ENCODE measurements at regions of chr3 and their contacts with region 1.

Region 1: DNA sequence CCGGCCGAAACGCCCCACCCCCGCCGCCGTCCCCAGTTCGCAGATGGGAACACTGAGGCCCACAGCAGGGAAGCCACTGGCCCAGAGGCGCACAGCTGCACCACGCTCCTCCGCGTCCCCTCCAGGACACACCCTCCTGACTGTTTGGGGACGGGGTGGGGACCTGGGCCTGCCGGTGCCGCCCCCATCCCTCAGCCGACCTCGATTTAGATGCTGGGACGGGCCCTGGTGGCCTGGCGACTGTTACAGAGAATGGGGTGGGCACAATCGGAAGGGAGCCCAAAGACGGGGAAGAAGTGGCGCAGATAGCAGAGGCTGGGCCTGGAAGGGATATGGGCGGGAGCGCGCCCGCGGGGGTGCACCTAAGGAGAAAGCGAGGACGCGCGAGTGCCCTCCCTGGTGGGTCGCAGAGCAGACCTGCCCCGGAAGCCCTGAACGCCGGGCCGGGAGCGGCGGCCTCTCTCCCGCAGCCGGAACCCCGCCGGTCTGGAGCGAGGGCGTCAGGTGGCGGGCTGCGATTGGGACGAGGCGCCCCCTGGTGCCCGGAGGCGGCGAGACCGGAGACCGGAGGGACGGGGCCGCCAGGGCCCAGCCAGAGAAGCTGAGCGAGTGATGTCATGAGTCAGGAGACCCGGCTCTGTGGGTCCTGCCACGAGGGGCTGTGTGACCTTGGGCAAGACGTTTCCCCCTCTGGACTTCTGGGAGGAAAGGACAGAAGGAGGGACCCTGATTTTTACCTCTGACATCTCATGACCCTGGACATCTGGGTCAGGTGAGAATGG is 78.4 kb downstream of the IQSEC1 start:
- DNase-seq: peak; percentile 82 to 96
- ATAC-seq: peak; percentile 81 to 94
- H3K4me3 ChIP-seq: peak overlapping the region; percentile 84
- H3K27ac ChIP-seq: peak overlapping the region; percentile 74 to 85
- H3K4me1 ChIP-seq: peaks cover 34% of the 10 kb centered on the region
- CTCF ChIP-seq: peak; percentile 79
- EP300 ChIP-seq: no peak
- POLR2A ChIP-seq: peak; percentile 66
- RAD21 ChIP-seq: peak; percentile 49 to 65

Region 2: DNA sequence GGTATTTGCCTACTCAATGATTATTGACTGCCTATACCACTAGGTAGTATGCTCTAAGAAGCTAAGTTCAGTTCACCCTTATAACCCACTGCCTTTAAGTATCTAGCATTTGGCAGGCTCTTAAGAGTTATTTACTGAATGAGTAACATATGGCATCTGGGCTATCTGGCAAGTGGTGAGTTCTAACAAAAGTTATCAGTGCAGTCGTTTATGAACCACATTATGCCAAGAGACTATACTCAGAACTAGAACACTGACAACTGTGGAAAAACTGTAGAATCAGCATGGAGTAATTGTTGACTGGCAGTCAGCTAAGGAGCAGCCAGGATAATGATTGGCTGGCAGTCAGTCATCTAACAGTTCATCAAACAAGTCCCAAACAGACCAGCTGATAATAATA is 356.7 kb before region 1 on chr3:
- CTCF ChIA-PET with region 1: no interaction called
- POLR2A ChIA-PET with region 1: no interaction called
- DNase-seq: no peak
- ATAC-seq: peak in 1 of 2 experiments; percentile 49; a peak in 2 of 6 replicates
- H3K4me3 ChIP-seq: no peak overlapping the region
- H3K27ac ChIP-seq: no peak overlapping the region
- H3K4me1 ChIP-seq: peaks cover 9% of the 10 kb centered on the region; the same call in 1 of the 3 replicates
- CTCF ChIP-seq: no peak
- EP300 ChIP-seq: no peak
- POLR2A ChIP-seq: no peak
- RAD21 ChIP-seq: no peak

Region 3: DNA sequence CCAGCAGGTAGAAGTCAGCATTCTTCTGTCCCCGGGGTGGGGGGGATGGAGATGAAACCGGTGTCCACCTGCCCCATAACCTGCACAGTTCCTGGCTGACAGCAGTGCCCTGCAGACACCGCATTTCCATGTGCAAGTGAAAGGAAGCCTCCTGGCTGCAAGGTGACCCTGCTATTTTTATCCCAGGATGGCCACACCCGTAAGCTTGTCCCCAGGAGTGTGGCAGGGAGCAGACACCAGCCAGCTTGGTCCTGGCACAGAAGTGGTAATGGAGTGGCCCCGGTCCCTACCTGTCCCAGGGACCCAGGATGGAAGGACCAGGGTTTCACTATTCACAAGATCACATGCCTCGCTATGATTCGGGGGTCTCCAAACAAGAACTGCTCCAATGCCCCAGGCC is 68.1 kb before region 1 on chr3:
- CTCF ChIA-PET with region 1: interaction called, 10 read pairs
- POLR2A ChIA-PET with region 1: no interaction called
- DNase-seq: no peak
- ATAC-seq: no peak
- H3K4me3 ChIP-seq: no peak overlapping the region
- H3K27ac ChIP-seq: no peak overlapping the region
- H3K4me1 ChIP-seq: no peaks in the 10 kb centered on the region
- CTCF ChIP-seq: no peak
- EP300 ChIP-seq: no peak
- POLR2A ChIP-seq: no peak
- RAD21 ChIP-seq: no peak

Region 4: GRCh38 chr3:12967606-12968351 is 27.0 kb before region 1 on chr3:
- CTCF ChIA-PET with region 1: interaction called, 35 read pairs
- POLR2A ChIA-PET with region 1: no interaction called
- DNase-seq: peak; percentile 89
- ATAC-seq: peak; percentile 73 to 88
- H3K4me3 ChIP-seq: peak overlapping the region; percentile 75
- H3K27ac ChIP-seq: peak overlapping the region; percentile 82 to 93
- H3K4me1 ChIP-seq: peaks cover 25% of the 10 kb centered on the region
- CTCF ChIP-seq: no peak
- EP300 ChIP-seq: no peak
- POLR2A ChIP-seq: peak; percentile 55
- RAD21 ChIP-seq: no peak

Region 5: DNA sequence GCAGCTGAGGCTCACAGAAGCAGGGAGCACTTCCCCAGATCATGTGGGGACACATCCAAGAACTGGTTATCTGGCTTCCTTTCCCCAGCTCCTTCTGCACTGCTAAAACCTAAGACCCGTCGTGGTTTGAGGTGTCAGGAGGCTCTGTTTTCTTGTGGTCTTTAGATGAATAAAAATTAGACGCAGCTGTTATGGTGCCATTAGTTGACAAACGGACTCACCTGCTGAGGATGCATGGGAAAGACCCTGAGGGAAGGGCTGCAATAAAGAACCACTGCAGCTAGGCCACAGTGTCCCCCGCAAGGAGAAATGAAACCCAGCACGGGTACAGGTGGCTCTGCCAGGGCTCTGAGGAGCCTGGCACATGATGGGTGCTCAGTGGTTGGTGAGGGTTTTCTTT is 21.0 kb before region 1 on chr3:
- CTCF ChIA-PET with region 1: interaction called, 13 read pairs
- POLR2A ChIA-PET with region 1: no interaction called
- DNase-seq: no peak
- ATAC-seq: no peak
- H3K4me3 ChIP-seq: no peak overlapping the region
- H3K27ac ChIP-seq: no peak overlapping the region
- H3K4me1 ChIP-seq: no peaks in the 10 kb centered on the region
- CTCF ChIP-seq: no peak
- EP300 ChIP-seq: no peak
- POLR2A ChIP-seq: no peak
- RAD21 ChIP-seq: no peak

Region 6: GRCh38 chr3:12984023-12984823 is 10.6 kb before region 1 on chr3:
- CTCF ChIA-PET with region 1: interaction called, 50 read pairs
- POLR2A ChIA-PET with region 1: interaction called, 17 read pairs
- DNase-seq: peak; percentile 70 to 83
- ATAC-seq: peak; percentile 91 to 98
- H3K4me3 ChIP-seq: no peak overlapping the region
- H3K27ac ChIP-seq: no peak overlapping the region
- H3K4me1 ChIP-seq: no peaks in the 10 kb centered on the region
- CTCF ChIP-seq: peak; percentile 68
- EP300 ChIP-seq: no peak
- POLR2A ChIP-seq: no peak
- RAD21 ChIP-seq: peak; percentile 57 to 72

Region 7: GRCh38 chr3:13011498-13012227 is 16.9 kb after region 1 on chr3:
- CTCF ChIA-PET with region 1: interaction called, 56 read pairs
- POLR2A ChIA-PET with region 1: interaction called, 3 read pairs
- DNase-seq: no peak
- ATAC-seq: no peak
- H3K4me3 ChIP-seq: no peak overlapping the region
- H3K27ac ChIP-seq: no peak overlapping the region
- H3K4me1 ChIP-seq: no peaks in the 10 kb centered on the region
- CTCF ChIP-seq: no peak
- EP300 ChIP-seq: no peak
- POLR2A ChIP-seq: no peak
- RAD21 ChIP-seq: no peak

Measured in A549 (cell line).